Heart right ventricle (tissue), 16 donors: ENCODE measurements at regions of chr19 and their contacts with region 1.

Region 1: DNA sequence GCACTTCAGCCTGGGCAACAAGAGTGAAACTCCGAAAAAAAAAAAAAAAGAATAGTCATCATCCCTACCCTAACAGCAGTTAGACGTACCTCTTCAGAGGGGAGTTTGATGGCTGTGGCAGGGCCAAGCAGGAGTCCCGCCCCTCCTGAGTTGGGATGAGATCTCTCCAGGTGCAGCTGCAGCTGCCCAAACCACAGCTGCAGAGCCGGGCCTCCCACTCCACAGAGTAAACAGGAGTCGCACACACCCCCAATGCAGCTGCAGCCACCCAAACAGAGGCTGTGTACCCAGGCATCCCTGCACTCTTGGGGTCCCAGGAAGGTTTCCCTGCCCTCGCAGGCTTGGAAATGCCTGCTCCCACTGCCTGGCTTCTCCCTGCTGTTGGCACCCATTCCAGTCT is 17.4 kb upstream of the MLLT1 start:
- DNase-seq: no peak
- ATAC-seq: no peak
- H3K4me3 ChIP-seq: no peak overlapping the region
- H3K27ac ChIP-seq: no peak overlapping the region
- H3K4me1 ChIP-seq: no peaks in the 10 kb centered on the region
- H3K27me3 ChIP-seq: no peaks in the 10 kb centered on the region
- CTCF ChIP-seq: no peak

Region 2: DNA sequence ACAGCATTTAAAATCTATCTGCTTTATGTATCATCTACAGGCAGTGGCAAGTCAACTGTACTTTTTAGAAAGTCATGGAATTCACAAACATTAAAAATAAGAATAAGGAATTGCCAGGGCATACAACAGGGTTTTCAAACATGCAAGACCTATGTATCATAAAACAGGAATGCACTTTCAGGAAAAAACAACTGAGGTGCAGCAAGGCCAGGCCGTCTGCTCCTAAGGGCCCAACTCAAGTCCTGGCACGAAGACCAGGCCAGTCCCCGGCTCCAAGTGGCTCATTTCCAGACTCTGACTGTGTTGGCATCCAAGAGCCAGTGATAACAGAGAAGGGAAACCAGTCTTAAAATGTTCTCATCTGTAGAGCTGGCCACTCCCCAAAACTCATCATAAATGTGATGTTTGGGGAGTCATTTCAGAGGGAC is 194.0 kb before region 1 on chr19:
- intact Hi-C with region 1: no loop called
- DNase-seq: peak; percentile 61 to 78
- ATAC-seq: peak; percentile 73 to 90 (median 82)
- H3K4me3 ChIP-seq: no peak overlapping the region
- H3K27ac ChIP-seq: peak overlapping the region; percentile 5 to 80 (median 67)
- H3K4me1 ChIP-seq: peaks cover 5 to 75% (median 56%) of the 10 kb centered on the region in 9 donors
- H3K27me3 ChIP-seq: no peaks in the 10 kb centered on the region
- CTCF ChIP-seq: no peak

Region 3: GRCh38 chr19:6125571-6125989 is 171.6 kb before region 1 on chr19:
- intact Hi-C with region 1: loop called in 2 of 10 experiments (anchors 5 to 10 kb)
- DNase-seq: peak in 1 of 2 donors; percentile 63
- ATAC-seq: peak; percentile 74 to 91 (median 86)
- H3K4me3 ChIP-seq: no peak overlapping the region
- H3K27ac ChIP-seq: no peak overlapping the region
- H3K4me1 ChIP-seq: no peaks in the 10 kb centered on the region
- H3K27me3 ChIP-seq: no peaks in the 10 kb centered on the region
- CTCF ChIP-seq: peak; percentile 85 to 98 (median 94)

Region 4: GRCh38 chr19:6161271-6161850 is 135.8 kb before region 1 on chr19:
- intact Hi-C with region 1: loop called in 5 of 10 experiments (anchors 2 to 5 kb)
- DNase-seq: peak; percentile 18 to 63
- ATAC-seq: peak; percentile 79 to 96 (median 89)
- H3K4me3 ChIP-seq: no peak overlapping the region
- H3K27ac ChIP-seq: peak overlapping the region in 6 of 10 donors; percentile 21 to 63 (median 32)
- H3K4me1 ChIP-seq: peaks cover 0 to 8% (median 0%) of the 10 kb centered on the region in 9 donors
- H3K27me3 ChIP-seq: no peaks in the 10 kb centered on the region
- CTCF ChIP-seq: no peak

Region 5: GRCh38 chr19:6167115-6167514 is 130.1 kb before region 1 on chr19:
- intact Hi-C with region 1: loop called in 5 of 10 experiments (anchors 2 to 5 kb)
- DNase-seq: no peak
- ATAC-seq: no peak
- H3K4me3 ChIP-seq: no peak overlapping the region
- H3K27ac ChIP-seq: no peak overlapping the region
- H3K4me1 ChIP-seq: peaks cover 0 to 1% (median 0%) of the 10 kb centered on the region in 9 donors
- H3K27me3 ChIP-seq: no peaks in the 10 kb centered on the region
- CTCF ChIP-seq: no peak